Naive thymus-derived CD4-positive, alpha-beta T cell (primary cell): ENCODE measurements at regions of chr3 and their contacts with region 1.

Region 1: DNA sequence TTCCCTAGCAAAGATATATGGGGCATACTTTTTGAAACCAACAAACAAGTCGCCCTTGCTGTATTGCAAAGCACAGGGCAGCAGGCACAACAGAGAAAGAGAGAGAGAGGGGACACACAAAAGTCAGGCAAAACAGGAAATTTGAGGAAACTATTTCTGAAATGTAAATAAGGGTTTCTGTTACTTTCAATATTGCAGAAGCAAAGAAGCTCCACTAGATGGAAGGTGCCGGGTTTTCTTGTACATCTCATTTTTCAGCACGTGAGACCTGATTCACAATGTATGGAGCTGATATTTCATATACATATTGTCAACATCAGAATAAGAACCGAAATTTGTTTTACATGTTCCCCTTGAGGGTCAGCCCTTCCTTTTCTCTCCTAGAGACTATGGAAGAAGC is 127.4 kb downstream of the FOXP1 start:
- DNase-seq: peak in 5 of 9 donors; percentile 41 to 65 (median 57)
- ATAC-seq: peak; percentile 59
- H3K4me3 ChIP-seq: peak overlapping the region; percentile 23
- H3K4me3 Mint-ChIP-seq: peak overlapping the region; percentile 75 to 90 (median 78)
- H3K27ac ChIP-seq: peak overlapping the region; percentile 90
- H3K27ac Mint-ChIP-seq: peak overlapping the region; percentile 90 to 99 (median 97)
- H3K4me1 ChIP-seq: peaks cover 72 to 84% of the 10 kb centered on the region in 2 donors
- H3K4me1 Mint-ChIP-seq: peaks cover 56 to 100% (median 92%) of the 10 kb centered on the region in 7 donors
- H3K27me3 ChIP-seq: no peaks in the 10 kb centered on the region
- H3K27me3 Mint-ChIP-seq: peaks cover 0 to 13% (median 0%) of the 10 kb centered on the region in 5 donors

Region 2: GRCh38 chr3:71389911-71390573 is 66.1 kb before region 1 on chr3:
- CTCF ChIA-PET with region 1: no interaction called
- POLR2A ChIA-PET with region 1: interaction called, 3 read pairs
- intact Hi-C with region 1: loop called in 1 of 2 experiments (anchors 2 kb)
- DNase-seq: peak in 8 of 9 donors; percentile 25 to 67 (median 49)
- ATAC-seq: peak; percentile 55
- H3K4me3 ChIP-seq: peak overlapping the region; percentile 51
- H3K4me3 Mint-ChIP-seq: peak overlapping the region; percentile 68 to 88 (median 83)
- H3K27ac ChIP-seq: peak overlapping the region; percentile 81
- H3K27ac Mint-ChIP-seq: peak overlapping the region; percentile 75 to 99 (median 90)
- H3K4me1 ChIP-seq: peaks cover 29 to 74% of the 10 kb centered on the region in 2 donors
- H3K4me1 Mint-ChIP-seq: peaks cover 27 to 93% (median 83%) of the 10 kb centered on the region in 7 donors
- H3K27me3 ChIP-seq: no peaks in the 10 kb centered on the region
- H3K27me3 Mint-ChIP-seq: peaks cover 0 to 22% (median 0%) of the 10 kb centered on the region in 5 donors

Region 3: DNA sequence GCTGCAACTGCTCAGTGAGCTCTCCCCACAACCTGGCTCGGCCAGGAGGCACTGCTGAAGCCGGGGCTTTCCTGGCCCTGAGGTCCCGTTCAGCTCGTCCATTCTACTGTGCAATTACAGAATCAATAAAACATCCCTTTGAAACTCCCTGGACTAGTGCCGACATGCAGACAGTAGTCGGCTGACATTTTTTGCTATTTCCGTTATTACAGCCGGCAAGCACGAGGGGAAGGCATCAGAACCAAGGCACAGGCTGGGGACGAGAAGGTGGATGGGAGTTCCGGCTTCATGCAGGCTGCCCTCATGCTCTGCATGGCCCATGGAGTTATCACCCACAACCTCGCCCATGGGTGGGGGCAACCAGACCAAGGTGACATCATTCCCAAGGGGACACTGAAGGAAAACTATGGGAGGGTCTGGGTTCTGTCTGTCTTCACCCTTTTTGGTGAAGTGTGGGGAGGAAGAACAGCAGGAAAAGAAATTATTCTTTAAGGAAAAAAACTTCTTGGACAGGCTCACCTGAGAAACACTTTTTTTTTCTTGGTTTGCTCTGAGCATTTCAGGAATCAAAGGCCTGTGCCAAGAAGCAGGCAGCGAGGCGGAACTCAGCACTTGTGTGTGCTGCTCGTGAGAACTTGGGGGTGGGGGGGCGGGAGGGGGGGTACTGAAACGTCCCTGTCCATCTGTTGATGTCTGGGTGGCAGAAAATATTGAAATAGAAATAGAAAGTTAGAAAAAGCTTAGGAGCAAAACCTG is 27.1 kb before region 1 on chr3:
- CTCF ChIA-PET with region 1: interaction called, 6 read pairs
- POLR2A ChIA-PET with region 1: interaction called, 356 read pairs
- intact Hi-C with region 1: loop called in 1 of 2 experiments (anchors 1 kb)
- DNase-seq: peak in 1 of 9 donors; percentile 43
- ATAC-seq: peak; percentile 26
- H3K4me3 ChIP-seq: peak overlapping the region; percentile 23
- H3K4me3 Mint-ChIP-seq: peak overlapping the region in 9 of 10 donors; percentile 65 to 81 (median 77)
- H3K27ac ChIP-seq: peak overlapping the region; percentile 68
- H3K27ac Mint-ChIP-seq: peak overlapping the region; percentile 7 to 99 (median 95)
- H3K4me1 ChIP-seq: peaks cover 25 to 88% of the 10 kb centered on the region in 2 donors
- H3K4me1 Mint-ChIP-seq: peaks cover 55 to 100% (median 97%) of the 10 kb centered on the region in 7 donors
- H3K27me3 ChIP-seq: no peaks in the 10 kb centered on the region
- H3K27me3 Mint-ChIP-seq: peaks cover 0 to 31% (median 0%) of the 10 kb centered on the region in 5 donors

Region 4: GRCh38 chr3:71466483-71466882 is 10.3 kb after region 1 on chr3:
- CTCF ChIA-PET with region 1: interaction called, 6 read pairs
- POLR2A ChIA-PET with region 1: interaction called, 11 read pairs
- intact Hi-C with region 1: loop called in 1 of 2 experiments (anchors 1 kb)
- DNase-seq: no peak
- ATAC-seq: no peak
- H3K4me3 ChIP-seq: no peak overlapping the region
- H3K4me3 Mint-ChIP-seq: peak overlapping the region in 3 of 10 donors; percentile 21 to 73 (median 61)
- H3K27ac ChIP-seq: no peak overlapping the region
- H3K27ac Mint-ChIP-seq: peak overlapping the region in 8 of 9 donors; percentile 8 to 99 (median 90)
- H3K4me1 ChIP-seq: peaks cover 5 to 44% of the 10 kb centered on the region in 2 donors
- H3K4me1 Mint-ChIP-seq: peaks cover 11 to 98% (median 79%) of the 10 kb centered on the region in 7 donors
- H3K27me3 ChIP-seq: no peaks in the 10 kb centered on the region
- H3K27me3 Mint-ChIP-seq: no peaks in the 10 kb centered on the region

Region 5: GRCh38 chr3:71487418-71487817 is 31.3 kb after region 1 on chr3:
- CTCF ChIA-PET with region 1: interaction called, 18 read pairs
- POLR2A ChIA-PET with region 1: interaction called, 182 read pairs
- intact Hi-C with region 1: loop called in 1 of 2 experiments (anchors 1 kb)
- DNase-seq: peak in 2 of 9 donors; percentile 23 to 32
- ATAC-seq: no peak
- H3K4me3 ChIP-seq: peak overlapping the region; percentile 19
- H3K4me3 Mint-ChIP-seq: peak overlapping the region; percentile 70 to 98 (median 88)
- H3K27ac ChIP-seq: peak overlapping the region; percentile 89
- H3K27ac Mint-ChIP-seq: peak overlapping the region; percentile 79 to 100 (median 98)
- H3K4me1 ChIP-seq: peaks cover 66 to 93% of the 10 kb centered on the region in 2 donors
- H3K4me1 Mint-ChIP-seq: peaks cover 44 to 94% (median 88%) of the 10 kb centered on the region in 7 donors
- H3K27me3 ChIP-seq: no peaks in the 10 kb centered on the region
- H3K27me3 Mint-ChIP-seq: peaks cover 0 to 3% (median 0%) of the 10 kb centered on the region in 5 donors

Region 6: GRCh38 chr3:71578054-71578755 is 122.0 kb after region 1 on chr3:
- CTCF ChIA-PET with region 1: no interaction called
- POLR2A ChIA-PET with region 1: interaction called, 11 read pairs
- intact Hi-C with region 1: no loop called
- DNase-seq: no peak
- ATAC-seq: no peak
- H3K4me3 ChIP-seq: peak overlapping the region; percentile 9
- H3K4me3 Mint-ChIP-seq: peak overlapping the region in 4 of 10 donors; percentile 14 to 49 (median 26)
- H3K27ac ChIP-seq: no peak overlapping the region
- H3K27ac Mint-ChIP-seq: peak overlapping the region in 8 of 9 donors; percentile 41 to 79 (median 60)
- H3K4me1 ChIP-seq: no peaks in the 10 kb centered on the region
- H3K4me1 Mint-ChIP-seq: peaks cover 10 to 44% (median 31%) of the 10 kb centered on the region in 7 donors
- H3K27me3 ChIP-seq: no peaks in the 10 kb centered on the region
- H3K27me3 Mint-ChIP-seq: peaks cover 0 to 34% (median 0%) of the 10 kb centered on the region in 5 donors